ENCODE measurements at regions of chr17 and their contacts with region 1.

Region 1: GRCh38 chr17:43880420-43880991 is 26.8 kb downstream of the MPP2 start:
- DNase-seq: peak; percentile 59 to 80
- ATAC-seq: peak; percentile 82 to 96 (median 86)
- H3K4me3 ChIP-seq: no peak overlapping the region
- H3K27ac ChIP-seq: no peak overlapping the region
- H3K4me1 ChIP-seq: peaks cover 11% of the 10 kb centered on the region
- H3K27me3 ChIP-seq: no peaks in the 10 kb centered on the region
- CTCF ChIP-seq: peak; percentile 83

Region 2: GRCh38 chr17:43823350-43824084 is 57.0 kb before region 1 on chr17:
- intact Hi-C with region 1: no loop called
- DNase-seq: no peak
- ATAC-seq: no peak
- H3K4me3 ChIP-seq: no peak overlapping the region
- H3K27ac ChIP-seq: no peak overlapping the region
- H3K4me1 ChIP-seq: no peaks in the 10 kb centered on the region
- H3K27me3 ChIP-seq: no peaks in the 10 kb centered on the region
- CTCF ChIP-seq: no peak

Region 3: DNA sequence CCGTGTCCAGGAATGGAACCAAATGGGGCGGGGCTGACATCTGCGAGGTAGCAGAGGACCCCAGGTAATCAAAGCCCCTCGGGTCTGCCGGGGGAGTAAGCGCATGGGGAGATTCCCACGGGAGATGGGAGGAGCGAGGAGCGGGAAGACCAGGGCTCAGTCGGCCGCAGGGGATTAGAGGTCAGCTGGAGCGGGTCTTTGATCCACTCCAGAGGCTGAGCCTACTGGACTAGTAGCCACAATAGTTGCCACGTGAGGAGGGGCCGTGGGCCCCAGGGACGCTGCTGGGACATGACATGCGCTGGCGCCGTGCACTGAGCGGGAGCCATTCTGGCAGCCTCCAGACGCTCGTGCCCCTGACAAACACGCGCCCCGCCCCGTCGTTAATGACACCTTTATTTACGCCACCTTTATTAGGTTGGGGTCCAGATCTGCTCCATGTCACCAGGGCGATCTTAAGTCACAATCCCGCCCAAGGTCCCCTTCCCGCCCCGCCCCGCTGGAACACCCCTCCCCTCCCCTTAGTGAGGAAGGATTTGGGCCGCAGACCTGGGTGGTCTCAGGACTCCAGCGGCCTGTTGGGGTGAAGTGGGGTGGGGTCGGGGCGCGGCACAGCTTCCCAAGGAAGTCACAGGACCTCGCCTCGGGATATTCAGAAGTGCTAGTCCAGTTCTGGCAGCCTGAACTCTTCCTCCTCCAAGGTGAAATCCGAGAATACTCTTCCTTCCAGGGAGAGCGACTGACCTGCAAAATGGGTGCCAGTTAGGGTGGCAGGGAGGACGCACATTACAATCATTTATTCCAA is 46.8 kb after region 1 on chr17:
- intact Hi-C with region 1: loop called in 1 of 2 experiments (anchors 5 kb)
- DNase-seq: peak; percentile 33 to 72
- ATAC-seq: peak; percentile 71 to 88 (median 76)
- H3K4me3 ChIP-seq: peak overlapping the region; percentile 67
- H3K27ac ChIP-seq: peak overlapping the region; percentile 58
- H3K4me1 ChIP-seq: no peaks in the 10 kb centered on the region
- H3K27me3 ChIP-seq: peaks cover 0 to 11% (median 3%) of the 10 kb centered on the region in 3 donors
- CTCF ChIP-seq: no peak

Region 4: DNA sequence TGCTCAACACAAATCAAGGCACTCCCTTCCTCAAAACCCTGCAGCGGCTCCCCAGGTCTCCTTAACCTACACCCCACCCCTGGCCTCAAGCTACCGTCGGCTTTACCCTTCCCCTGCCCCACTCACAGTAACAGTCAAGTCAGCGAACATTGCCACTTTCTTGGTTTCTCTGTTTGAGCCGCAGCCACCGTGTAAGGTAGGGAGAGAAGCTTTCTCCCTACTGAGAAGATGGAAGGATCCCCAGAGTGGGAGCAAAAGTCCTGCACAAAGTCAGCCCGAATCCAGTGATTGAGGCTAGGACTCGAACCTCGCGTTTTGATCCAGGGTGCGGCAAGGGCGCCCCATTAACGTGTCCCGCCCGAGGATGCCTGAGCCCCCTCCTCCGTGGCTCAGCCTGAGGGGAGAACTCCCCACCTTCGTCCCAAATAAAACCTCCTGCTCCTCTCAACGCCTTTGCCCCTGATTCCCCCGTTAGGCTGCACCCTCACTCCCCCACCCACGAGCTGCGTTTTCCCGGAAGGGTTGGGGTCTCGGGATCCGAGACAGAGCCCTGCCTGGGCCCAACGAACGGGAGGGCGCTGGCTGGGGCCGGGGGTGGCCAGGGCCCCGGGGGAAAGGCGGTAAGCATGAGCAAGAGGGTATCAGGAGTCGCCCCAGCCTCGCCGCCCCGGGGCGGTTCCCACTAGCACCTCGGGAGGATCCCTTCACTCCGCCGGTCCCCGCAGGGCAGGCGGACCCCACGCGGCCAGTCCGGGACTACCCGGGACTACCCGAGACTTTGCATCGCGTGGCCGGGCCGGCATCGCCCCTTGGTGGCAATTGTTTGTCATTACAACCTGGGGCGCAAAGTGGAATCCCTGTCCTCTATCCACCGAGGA is 114.0 kb after region 1 on chr17:
- intact Hi-C with region 1: loop called in 1 of 2 experiments (anchors 1 kb)
- DNase-seq: peak; percentile 66 to 82
- ATAC-seq: peak; percentile 87 to 96 (median 92)
- H3K4me3 ChIP-seq: peak overlapping the region; percentile 52
- H3K27ac ChIP-seq: no peak overlapping the region
- H3K4me1 ChIP-seq: peaks cover 6% of the 10 kb centered on the region
- H3K27me3 ChIP-seq: peaks cover 0 to 23% (median 2%) of the 10 kb centered on the region in 3 donors
- CTCF ChIP-seq: peak; percentile 91

Measured in psoas muscle (tissue), 8 donors.